MCF 10A (cell line): ENCODE measurements at regions of chr6 and their contacts with region 1.

Region 1: DNA sequence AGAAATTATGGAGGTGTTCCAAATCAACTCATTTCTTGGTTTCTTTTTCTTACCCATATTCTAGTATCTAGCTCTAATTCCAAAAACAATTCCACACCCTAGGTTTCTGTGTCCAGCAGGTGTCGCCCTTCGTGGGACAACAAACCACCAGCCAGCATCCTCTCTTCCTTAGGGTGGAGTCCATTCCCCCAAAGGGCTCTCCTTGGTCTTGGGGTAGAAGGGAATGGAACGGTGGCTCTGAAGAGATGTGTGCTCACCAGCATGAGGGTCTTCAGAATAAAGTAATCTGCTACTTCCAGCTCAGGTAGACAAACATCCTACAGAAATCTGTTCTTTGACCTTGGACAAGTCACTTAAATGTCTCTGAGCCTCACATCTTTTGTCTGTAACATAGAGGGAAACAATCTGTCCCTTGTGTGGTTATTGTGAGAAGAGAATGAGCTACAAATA is 7.2 kb downstream of the HLA-DMB start:
- DNase-seq: peak; percentile 82
- H3K4me3 Mint-ChIP-seq: no peak overlapping the region
- H3K27ac Mint-ChIP-seq: no peak overlapping the region
- H3K4me1 Mint-ChIP-seq: no peaks in the 10 kb centered on the region
- H3K27me3 Mint-ChIP-seq: peaks cover 85% of the 10 kb centered on the region
- CTCF ChIP-seq: peak; percentile 66

Region 2: DNA sequence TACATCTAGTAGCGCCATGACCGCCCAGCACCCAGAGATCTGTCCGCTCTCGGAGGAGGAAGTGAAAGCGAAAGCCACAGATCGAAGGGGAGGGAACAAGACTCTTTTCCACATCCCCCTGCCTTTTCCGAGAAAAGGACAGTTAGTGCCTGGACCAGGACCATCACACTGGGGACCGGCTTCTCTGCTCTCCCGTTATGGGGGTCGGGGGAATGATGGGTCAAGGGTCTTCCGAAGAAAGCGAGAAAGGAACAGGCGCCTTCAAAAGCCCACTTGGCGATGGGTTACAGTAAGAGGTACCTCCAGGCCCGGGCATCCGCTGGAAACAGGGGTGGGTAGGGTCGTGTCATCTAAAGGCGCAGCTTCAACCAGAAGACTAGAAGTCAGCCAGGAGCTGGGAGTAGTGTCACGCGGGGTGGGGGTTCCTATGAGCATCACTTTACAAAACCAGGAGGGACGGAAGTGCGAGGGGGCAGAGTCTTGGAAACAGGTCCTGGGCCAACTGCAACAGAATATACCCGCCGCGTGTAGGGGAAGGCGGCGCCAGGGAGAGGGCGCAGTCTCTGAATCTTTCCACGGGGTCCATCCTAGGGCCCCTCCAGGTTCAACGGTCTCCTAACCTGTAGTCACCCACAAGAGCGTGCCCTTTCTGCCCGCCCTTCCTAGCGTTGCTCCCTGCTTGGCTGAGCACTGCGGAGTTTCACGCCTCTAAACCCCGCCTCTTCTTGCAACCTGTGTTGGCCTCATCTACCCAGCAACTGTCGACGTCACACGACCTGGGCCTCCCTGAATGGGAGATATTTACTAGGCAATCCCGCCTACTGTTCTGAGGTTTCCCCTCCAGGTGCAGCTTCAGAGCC is 89.5 kb before region 1 on chr6 and contains the start of gene PSMB8:
- CTCF ChIA-PET with region 1: interaction called, 14 read pairs
- POLR2A ChIA-PET with region 1: no interaction called
- intact Hi-C with region 1: no loop called
- DNase-seq: peak; percentile 98
- H3K4me3 Mint-ChIP-seq: peak within 1 kb of the TSS; percentile 99
- H3K27ac Mint-ChIP-seq: peak within 1 kb of the TSS; percentile 96
- H3K4me1 Mint-ChIP-seq: peaks cover 30% of the 10 kb centered on the region
- H3K27me3 Mint-ChIP-seq: no peaks in the 10 kb centered on the region
- CTCF ChIP-seq: no peak
- total RNA-seq, gene PSMB8: 34.1 and 47.3 TPM in 2 replicates

Region 3: DNA sequence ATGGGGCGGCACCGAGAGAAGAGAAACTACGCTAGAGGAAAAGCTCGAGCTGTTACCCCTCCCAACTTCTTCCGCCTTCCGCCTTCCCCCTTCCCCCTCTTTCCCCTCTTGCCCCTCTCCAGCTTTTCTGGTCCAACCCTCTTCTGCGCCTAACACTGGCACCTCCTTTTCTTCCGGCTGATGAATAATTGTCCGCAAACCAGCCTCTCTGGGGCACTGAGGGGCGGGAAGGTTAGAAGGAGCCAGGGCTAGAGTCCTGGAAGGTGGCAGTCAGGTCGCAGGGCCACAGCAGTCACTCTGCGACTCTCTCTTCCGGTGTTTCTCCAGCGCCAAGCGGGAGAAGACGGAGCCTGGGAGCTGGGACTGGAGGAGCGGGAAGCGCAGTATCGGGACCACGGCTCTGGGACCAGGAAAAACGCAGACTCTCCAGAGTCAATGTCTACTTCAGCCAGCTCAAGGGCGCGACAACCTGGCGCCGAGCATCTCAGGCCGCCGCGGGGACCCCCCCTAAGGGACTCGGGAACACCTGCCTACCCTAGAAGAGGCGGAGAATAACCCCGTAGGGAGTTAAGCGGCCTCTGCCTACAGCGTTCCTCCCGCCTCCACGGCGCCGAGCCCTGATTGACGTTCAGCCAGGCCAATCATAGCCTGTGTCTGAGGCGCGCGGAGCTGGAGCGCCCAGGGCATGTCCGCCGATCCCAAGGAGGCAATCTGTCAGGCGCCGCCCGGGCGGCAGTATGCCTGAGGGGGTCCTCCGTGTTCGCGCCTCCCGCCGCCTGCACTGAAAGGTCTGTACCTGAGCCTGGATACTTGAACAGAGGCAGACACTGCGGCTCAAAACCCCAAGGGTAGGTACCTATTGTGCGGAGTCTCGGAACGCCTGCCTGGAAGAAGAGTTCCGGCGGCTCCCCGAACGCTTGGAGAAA is 39.3 kb before region 1 on chr6:
- CTCF ChIA-PET with region 1: interaction called, 11 read pairs
- POLR2A ChIA-PET with region 1: interaction called, 4 read pairs
- intact Hi-C with region 1: loop called (anchors 5 kb)
- DNase-seq: peak; percentile 90
- H3K4me3 Mint-ChIP-seq: peak overlapping the region; percentile 84
- H3K27ac Mint-ChIP-seq: peak overlapping the region; percentile 80
- H3K4me1 Mint-ChIP-seq: peaks cover 10% of the 10 kb centered on the region
- H3K27me3 Mint-ChIP-seq: no peaks in the 10 kb centered on the region
- CTCF ChIP-seq: no peak

Region 4: DNA sequence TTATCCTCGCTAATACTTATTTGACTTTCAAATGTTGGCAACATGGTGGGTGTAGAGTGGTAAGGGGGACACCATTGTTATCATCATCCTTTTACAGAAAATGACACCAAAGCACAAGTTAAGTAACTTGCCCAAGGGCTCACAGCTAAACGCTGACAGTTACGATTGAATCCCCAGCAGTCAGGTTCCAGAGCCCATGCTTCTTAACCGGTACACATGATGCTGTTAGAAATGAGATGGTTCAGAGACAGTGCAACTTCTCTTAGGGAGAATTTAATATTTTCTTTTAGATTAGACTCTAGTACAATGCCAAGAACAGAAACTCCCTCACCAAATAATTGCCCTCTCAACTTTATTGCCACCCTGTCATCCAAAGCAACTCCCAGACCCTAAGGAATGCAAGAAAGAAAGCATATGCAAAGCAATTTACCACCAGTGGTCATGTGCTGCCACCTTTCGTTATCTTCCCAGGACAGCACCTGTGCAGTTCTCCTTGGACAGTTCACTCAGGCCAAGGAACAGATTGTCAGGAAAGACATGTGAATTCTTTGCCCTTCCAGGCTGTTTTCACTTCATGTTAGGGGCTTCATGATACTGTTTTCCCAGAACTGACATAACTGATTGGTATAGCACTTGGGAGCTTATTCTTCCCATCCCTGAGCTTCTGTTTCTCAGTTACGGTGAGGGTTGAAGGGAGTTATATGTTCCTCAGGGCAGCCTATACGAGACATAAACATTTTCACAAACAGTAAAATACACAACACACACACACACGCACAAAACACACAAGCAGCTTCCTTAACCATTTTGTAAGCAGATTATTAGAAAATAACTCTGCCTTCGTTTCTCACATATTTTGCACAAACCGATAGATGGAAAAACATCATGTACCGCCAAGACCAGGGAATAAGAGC is 14.1 kb after region 1 on chr6:
- CTCF ChIA-PET with region 1: interaction called, 49 read pairs
- POLR2A ChIA-PET with region 1: interaction called, 6 read pairs
- intact Hi-C with region 1: no loop called
- DNase-seq: peak; percentile 69
- H3K4me3 Mint-ChIP-seq: no peak overlapping the region
- H3K27ac Mint-ChIP-seq: no peak overlapping the region
- H3K4me1 Mint-ChIP-seq: peaks cover 5% of the 10 kb centered on the region
- H3K27me3 Mint-ChIP-seq: peaks cover 3% of the 10 kb centered on the region
- CTCF ChIP-seq: peak; percentile 75

Region 5: GRCh38 chr6:32964776-32965175 is 31.1 kb after region 1 on chr6:
- CTCF ChIA-PET with region 1: interaction called, 31 read pairs
- POLR2A ChIA-PET with region 1: interaction called, 6 read pairs
- intact Hi-C with region 1: loop called (anchors 1 kb)
- DNase-seq: no peak
- H3K4me3 Mint-ChIP-seq: no peak overlapping the region
- H3K27ac Mint-ChIP-seq: no peak overlapping the region
- H3K4me1 Mint-ChIP-seq: peaks cover 34% of the 10 kb centered on the region
- H3K27me3 Mint-ChIP-seq: no peaks in the 10 kb centered on the region
- CTCF ChIP-seq: no peak